ENCODE measurements at regions of chr6 and their contacts with region 1.

Region 1: GRCh38 chr6:42104095-42104806 is 38.2 kb downstream of the C6orf132 start:
- DNase-seq: peak; percentile 67
- H3K4me3 Mint-ChIP-seq: peak overlapping the region; percentile 48
- H3K27ac Mint-ChIP-seq: no peak overlapping the region
- H3K4me1 Mint-ChIP-seq: peaks cover 19% of the 10 kb centered on the region
- H3K27me3 Mint-ChIP-seq: peaks cover 10% of the 10 kb centered on the region

Region 2: DNA sequence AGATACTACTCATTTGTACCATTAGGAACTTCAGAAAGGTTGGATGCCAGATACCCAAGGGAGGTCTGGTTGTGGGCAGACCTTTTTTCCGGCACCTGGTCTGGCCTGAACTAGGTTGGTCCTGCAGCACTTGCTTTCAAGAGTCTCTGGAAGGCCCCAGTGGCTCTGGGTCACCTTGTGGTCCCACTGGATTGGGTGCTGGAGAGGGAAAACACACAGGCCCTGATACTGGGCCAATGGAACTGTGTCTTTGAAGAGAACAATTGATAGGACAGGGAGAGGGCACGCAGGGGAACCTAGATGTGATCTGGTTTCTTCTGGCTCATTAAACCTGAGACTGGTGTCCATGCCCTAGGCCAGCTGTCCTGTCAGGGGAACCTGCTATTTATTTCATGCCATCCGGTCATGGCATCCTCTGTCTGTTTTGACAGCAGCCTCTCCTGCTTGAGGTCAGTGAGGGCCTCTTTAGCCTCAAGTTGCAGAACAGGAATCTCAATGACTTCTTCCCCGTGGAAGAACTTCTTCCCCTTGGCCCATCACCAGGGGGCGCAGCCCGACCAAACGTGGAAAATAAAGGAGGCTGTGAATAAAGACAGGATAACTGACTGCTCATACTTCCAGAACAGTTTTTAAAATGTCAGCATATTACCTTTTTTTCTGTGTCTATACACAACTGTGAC is 29.0 kb before region 1 on chr6:
- CTCF ChIA-PET with region 1: interaction called, 13 read pairs
- POLR2A ChIA-PET with region 1: no interaction called
- DNase-seq: peak; percentile 61
- H3K4me3 Mint-ChIP-seq: no peak overlapping the region
- H3K27ac Mint-ChIP-seq: no peak overlapping the region
- H3K4me1 Mint-ChIP-seq: no peaks in the 10 kb centered on the region
- H3K27me3 Mint-ChIP-seq: no peaks in the 10 kb centered on the region

Region 3: DNA sequence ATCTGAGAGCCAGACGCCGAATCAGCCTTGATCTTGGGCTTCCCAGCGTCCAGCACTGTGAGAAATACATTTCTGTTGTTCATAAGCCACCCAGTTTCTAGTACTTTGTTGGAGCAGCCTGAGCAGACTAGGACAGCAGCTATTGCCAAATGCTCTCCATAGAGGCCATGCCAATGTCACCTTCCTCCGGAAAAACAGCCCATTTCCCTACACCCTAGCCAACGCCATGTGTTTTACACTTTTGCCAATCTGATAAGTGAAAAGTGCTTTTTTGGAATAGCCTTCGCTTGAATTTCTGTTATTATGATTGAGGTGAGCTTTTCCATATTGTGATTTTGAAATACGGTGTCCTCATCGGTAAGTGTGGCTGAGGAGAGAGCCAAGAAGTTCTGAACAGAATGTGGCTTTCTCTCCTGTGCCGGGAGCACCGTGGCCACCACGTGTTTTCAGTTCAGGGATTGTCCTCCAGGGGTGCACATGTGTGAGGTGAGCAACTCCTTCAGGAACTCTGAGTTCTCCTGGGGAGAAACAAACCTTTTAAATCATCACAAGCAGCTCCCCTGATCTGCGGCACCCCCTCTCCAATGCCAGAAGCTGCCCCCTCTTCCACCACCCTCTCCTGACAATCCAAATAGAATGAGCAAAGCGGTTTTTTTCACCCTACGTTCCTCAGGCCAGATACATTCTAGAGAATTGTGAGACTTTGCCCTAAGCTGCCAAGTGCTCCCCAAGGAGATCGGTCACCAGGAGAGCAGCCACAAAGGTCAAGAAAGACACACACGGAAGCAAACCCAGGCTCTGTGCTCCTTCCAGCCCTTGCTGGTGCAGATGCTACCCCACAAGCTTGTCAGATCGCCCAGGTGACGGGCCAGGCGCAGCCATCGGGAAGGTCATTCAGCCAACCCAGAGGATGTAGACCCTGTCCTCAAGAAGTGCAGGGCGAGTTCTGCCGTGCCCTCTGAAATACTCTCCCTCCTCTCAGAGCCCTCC is 17.9 kb before region 1 on chr6:
- CTCF ChIA-PET with region 1: interaction called, 62 read pairs
- POLR2A ChIA-PET with region 1: no interaction called
- DNase-seq: no peak
- H3K4me3 Mint-ChIP-seq: no peak overlapping the region
- H3K27ac Mint-ChIP-seq: no peak overlapping the region
- H3K4me1 Mint-ChIP-seq: no peaks in the 10 kb centered on the region
- H3K27me3 Mint-ChIP-seq: no peaks in the 10 kb centered on the region

Region 4: GRCh38 chr6:42118162-42119001 is 14.1 kb after region 1 on chr6:
- CTCF ChIA-PET with region 1: interaction called, 54 read pairs
- POLR2A ChIA-PET with region 1: no interaction called
- DNase-seq: no peak
- H3K4me3 Mint-ChIP-seq: no peak overlapping the region
- H3K27ac Mint-ChIP-seq: no peak overlapping the region
- H3K4me1 Mint-ChIP-seq: no peaks in the 10 kb centered on the region
- H3K27me3 Mint-ChIP-seq: peaks cover 8% of the 10 kb centered on the region

Measured in activated CD4-positive, alpha-beta T cell treated with anti-CD3 and anti-CD28 coated beads, Interleukin-2, amount 10 ng/mL, durations not matched to agents 7 days and 5 days (primary cell).